ENCODE measurements at regions of chr3 and their contacts with region 1.

Region 1: DNA sequence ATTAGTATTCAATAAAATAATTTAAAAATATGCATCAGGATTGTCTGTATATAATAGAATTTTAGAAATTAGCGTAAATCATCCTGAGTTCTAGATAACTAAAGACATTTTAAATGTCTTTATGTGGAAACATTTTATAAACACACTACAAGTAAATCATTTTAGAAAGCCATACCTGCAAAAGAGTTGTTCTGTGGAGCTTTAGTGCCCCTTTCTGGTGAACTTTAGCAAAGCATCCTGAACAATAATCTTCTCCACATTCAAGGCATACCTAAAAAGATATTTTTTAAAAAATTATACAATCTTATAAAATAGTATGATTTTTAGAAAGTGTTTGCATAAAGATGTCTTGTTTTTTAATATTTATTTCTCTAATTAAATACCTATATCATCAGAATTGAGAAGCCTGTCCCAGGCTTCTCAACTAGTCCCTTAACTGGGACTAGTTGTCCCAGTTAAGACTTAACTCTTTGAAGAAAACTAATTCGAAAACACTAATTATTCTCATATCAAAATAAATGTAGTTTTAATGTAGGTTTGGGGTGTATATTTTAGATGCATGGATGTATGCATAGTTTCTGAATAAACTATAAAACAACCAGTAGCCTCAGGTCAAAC is 29.7 kb downstream of the ZBBX start:
- DNase-seq: no peak

Region 2: DNA sequence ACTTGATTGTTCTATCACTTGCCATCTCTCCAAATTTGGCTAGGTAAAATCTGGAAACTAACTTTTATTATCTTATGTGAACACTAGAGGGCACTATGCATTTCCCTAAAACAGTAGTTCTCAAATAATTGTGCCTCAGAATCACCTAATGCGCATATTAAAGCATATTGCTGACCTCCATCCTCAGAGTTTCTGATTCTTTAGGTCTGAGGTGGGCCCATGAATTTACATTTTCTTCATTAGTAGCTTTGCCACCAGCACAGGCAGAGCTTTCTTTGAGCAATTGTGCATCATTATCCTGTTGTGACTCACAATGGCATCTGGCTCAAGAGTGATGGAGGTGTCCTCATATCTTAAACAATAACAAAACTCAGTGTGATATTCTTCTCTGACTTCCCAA is 1495.7 kb before region 1 on chr3:
- intact Hi-C with region 1: loop called (anchors 10 kb)
- DNase-seq: no peak

Region 3: GRCh38 chr3:166013073-166013679 is 1337.2 kb before region 1 on chr3:
- intact Hi-C with region 1: loop called (anchors 10 kb)
- DNase-seq: no peak

Region 4: GRCh38 chr3:167318991-167319615 is 31.3 kb before region 1 on chr3:
- intact Hi-C with region 1: no loop called
- DNase-seq: no peak

Region 5: DNA sequence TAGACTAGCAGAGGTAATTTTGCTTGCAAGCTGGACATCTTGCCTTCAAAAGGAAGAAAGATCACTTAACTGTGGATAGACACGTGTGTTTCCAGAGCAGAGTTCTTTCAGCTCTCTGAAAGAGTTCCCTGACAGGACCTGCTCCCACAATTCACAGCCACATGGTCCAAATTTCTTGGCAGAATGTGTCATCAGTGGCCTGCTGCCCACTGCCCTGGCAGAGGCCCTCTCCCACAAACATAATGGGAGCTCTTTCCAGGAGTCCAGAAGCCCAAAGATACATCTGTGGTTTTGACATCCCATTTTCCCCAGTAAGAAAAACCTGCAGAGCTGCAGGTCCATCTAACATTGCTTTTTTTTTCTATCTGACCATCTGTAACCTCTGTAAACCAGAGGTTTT is 433.4 kb after region 1 on chr3:
- intact Hi-C with region 1: no loop called
- DNase-seq: no peak

Measured in cardiac septum (tissue), 1 donor.